Aorta (tissue), 5 donors: ENCODE measurements at regions of chr6 and their contacts with region 1.

Region 1: GRCh38 chr6:30821862-30822782 is 62.2 kb upstream of the DDR1 start:
- DNase-seq: no peak
- ATAC-seq: no peak
- H3K4me3 ChIP-seq: no peak overlapping the region
- H3K27ac ChIP-seq: peak overlapping the region in 1 of 2 donors; percentile 37
- H3K4me1 ChIP-seq: peaks cover 0 to 10% of the 10 kb centered on the region in 2 donors
- H3K27me3 ChIP-seq: no peaks in the 10 kb centered on the region

Region 2: DNA sequence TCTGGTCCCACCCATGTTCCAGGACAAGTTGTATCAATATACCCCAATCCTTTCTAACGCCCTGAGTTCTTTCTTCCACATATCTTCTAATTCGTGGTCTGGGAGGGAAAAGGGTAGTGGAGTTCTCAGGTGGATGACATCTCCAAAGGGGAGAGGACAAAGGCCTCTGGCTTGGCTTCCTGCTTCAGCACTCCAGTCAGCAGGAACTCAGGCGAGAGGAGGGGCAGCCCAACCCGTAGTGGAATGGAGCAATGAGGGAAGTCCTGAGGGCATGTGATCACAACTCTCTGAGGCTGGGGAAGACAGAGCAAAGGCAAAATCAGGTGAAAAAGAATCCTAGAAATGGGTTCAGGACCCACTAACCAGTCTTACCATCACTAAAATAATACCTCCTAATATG is 121.8 kb before region 1 on chr6:
- intact Hi-C with region 1: no loop called
- DNase-seq: peak; percentile 14 to 68
- ATAC-seq: no peak
- H3K4me3 ChIP-seq: no peak overlapping the region
- H3K27ac ChIP-seq: no peak overlapping the region
- H3K4me1 ChIP-seq: no peaks in the 10 kb centered on the region
- H3K27me3 ChIP-seq: no peaks in the 10 kb centered on the region

Region 3: DNA sequence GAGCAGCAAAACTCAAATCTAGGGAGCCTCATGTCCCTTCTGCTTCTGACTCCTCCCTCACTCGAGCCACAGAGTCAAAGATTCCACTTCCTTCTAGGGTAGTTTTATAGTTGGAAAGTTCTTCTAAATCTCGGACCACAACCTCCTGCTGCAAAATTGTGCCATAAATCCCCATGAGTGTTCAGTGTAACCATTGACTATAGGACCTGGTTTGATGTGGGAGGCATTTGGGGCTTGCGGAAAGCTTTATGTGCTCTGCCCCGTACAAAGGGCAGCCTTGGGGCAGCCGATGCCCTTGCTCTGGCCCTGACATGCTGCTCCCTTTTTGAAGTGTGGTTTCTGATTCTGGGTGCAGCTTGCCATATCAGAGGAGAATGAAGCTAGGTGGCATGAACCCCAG is 34.2 kb before region 1 on chr6:
- intact Hi-C with region 1: loop called in 1 of 2 experiments (anchors 5 kb)
- DNase-seq: peak in 1 of 2 donors; percentile 30
- ATAC-seq: no peak
- H3K4me3 ChIP-seq: no peak overlapping the region
- H3K27ac ChIP-seq: no peak overlapping the region
- H3K4me1 ChIP-seq: no peaks in the 10 kb centered on the region
- H3K27me3 ChIP-seq: no peaks in the 10 kb centered on the region